ENCODE measurements at regions of chr17 and their contacts with region 1.

Region 1: DNA sequence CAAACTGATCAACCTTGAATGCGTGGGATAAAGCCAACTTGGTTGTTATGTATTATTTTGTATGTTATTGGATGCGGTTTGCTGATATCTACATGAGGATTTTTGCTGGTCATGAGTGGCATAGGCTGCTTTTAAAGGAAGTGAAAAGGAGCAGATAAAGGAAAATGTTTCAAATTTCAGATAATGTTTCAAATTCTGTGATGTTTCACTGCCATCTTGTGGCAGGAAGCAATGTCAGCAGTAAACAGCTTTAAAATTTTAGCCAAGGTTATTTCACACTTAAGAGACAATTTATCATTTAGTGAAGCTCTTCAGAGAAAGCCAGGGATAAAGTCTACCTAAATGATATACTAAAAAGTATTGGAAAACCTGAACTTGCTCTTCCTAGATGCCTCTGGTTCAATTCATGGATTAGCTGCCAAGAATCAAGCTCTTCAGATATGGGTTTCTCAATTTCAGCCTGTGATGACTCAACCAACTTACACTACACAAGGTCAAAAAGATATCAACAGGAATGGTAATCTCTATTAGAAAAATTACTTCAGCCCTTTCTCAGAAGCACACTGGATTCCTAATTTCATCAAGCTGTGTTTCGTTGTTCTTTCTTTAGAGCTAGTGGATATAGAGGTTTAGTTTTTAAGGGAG is 136.0 kb upstream of the C17orf78 start:
- H3K4me3 Mint-ChIP-seq: no peak overlapping the region
- H3K27ac Mint-ChIP-seq: no peak overlapping the region
- H3K4me1 Mint-ChIP-seq: no peaks in the 10 kb centered on the region
- H3K27me3 Mint-ChIP-seq: no peaks in the 10 kb centered on the region

Region 2: GRCh38 chr17:36601303-36602029 is 638.3 kb before region 1 on chr17 and contains the start of gene MRM1:
- intact Hi-C with region 1: loop called (anchors 10 kb)
- H3K4me3 Mint-ChIP-seq: peak within 1 kb of the TSS; percentile 83
- H3K27ac Mint-ChIP-seq: peak within 1 kb of the TSS; percentile 85
- H3K4me1 Mint-ChIP-seq: peaks cover 48% of the 10 kb centered on the region
- H3K27me3 Mint-ChIP-seq: no peaks in the 10 kb centered on the region

Region 3: GRCh38 chr17:37174205-37174604 is 65.6 kb before region 1 on chr17:
- intact Hi-C with region 1: no loop called
- H3K4me3 Mint-ChIP-seq: no peak overlapping the region
- H3K27ac Mint-ChIP-seq: no peak overlapping the region
- H3K4me1 Mint-ChIP-seq: no peaks in the 10 kb centered on the region
- H3K27me3 Mint-ChIP-seq: no peaks in the 10 kb centered on the region